Posterior vena cava (tissue), 2 donors: ENCODE measurements at regions of chr11 and their contacts with region 1.

Region 1: DNA sequence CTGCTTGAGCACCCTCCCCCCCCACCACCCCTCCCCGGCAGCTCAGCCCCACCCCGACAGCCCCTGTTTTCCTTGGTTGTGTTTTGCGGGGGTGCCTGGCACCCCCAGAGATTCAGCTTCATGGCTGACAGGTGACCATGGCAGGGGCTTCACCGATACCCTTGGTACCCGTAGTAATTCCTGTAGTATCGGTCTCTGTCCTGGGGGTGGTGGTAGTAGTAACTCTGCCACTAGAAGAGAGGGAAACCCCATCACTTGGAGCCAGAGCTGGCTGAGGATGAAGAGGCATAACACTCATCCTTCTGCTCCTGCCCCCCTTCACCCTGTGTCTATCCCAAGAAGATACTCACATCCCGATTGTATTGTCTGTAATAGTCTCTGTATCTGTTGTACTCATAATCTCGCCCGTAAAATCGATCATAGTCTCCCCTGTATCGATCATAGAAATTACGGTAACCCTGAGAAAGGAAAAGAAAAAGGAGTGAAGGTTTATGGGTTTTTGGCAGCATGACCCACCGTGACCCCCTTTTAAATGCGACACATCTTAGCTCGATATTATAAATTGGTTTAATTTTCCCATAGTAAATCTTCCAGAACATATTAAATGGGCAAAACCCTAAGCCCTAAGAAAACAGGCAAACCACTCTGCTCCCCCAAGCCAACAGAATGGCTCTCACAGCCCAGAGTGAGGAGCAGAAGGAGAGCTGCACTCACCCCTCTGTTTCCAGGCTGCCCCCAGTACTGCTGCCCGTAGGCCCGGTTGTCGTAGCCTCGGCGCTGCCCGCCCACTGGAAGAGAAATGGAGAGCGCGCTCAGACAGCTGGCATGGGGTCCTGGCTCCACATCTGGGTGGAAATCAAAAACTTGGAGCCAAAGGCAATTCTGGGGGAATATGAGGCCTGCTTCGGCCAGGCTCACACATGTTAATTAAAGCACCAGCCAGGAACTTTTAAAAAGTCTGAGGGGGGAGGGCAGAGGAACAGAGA is 8.0 kb downstream of the GNG3 start:
- DNase-seq: no peak

Region 2: GRCh38 chr11:62757846-62758788 is 42.7 kb after region 1 on chr11:
- intact Hi-C with region 1: loop called in 1 of 2 experiments (anchors 1 kb)
- DNase-seq: peak; percentile 35